ENCODE measurements at regions of chr17 and their contacts with region 1.

Region 1: GRCh38 chr17:75087558-75088453 is at the start of gene SLC16A5:
- DNase-seq: peak; percentile 95
- H3K4me3 Mint-ChIP-seq: peak within 1 kb of the TSS; percentile 87
- H3K27ac Mint-ChIP-seq: peak within 1 kb of the TSS; percentile 93
- H3K4me1 Mint-ChIP-seq: peaks cover 48% of the 10 kb centered on the region
- H3K27me3 Mint-ChIP-seq: no peaks in the 10 kb centered on the region
- CTCF ChIP-seq: no peak
- total RNA-seq, gene SLC16A5: 26.0 and 33.1 TPM in 2 replicates

Region 2: DNA sequence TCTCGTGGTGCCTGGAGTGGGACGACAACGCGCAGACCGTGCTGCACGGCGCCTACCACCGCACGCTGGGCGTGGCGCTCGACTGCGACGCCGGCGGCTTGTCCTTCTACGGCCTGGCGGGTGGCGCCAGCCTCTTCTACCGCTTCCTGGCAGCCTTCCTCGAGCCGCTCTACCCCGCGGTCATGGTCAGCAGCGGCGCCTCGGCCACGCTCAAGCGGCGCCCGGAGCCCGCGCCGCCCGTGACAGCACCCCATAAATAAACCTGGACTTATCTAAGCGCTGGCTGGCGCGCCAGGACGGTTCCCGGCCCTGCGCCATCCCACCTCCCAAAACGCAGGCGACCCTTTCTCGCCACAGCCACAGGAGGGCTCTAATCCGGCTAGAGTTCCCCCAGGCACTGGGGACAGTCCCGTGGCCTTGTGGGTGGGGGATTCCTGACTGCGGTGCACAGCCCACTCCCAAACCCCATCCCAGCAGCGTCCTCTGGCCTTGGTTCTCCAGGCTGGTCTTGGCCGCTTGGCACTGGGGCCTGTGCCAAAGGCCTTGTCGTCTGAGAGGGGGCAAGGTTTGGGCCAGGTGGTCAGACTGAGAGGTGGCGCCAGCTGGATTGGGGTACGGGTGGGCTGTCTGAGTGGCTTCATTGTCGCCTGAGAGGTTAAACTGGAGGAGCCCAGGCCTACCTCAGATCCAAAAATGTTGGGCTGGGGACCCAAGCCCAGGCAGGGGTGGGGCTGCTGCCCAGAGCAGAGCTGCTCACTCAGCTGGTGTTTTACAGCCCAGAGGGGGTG is 10.1 kb before region 1 on chr17:
- CTCF ChIA-PET with region 1: no interaction called
- POLR2A ChIA-PET with region 1: interaction called, 21 read pairs
- intact Hi-C with region 1: no loop called
- DNase-seq: no peak
- H3K4me3 Mint-ChIP-seq: no peak overlapping the region
- H3K27ac Mint-ChIP-seq: no peak overlapping the region
- H3K4me1 Mint-ChIP-seq: peaks cover 17% of the 10 kb centered on the region
- H3K27me3 Mint-ChIP-seq: no peaks in the 10 kb centered on the region
- CTCF ChIP-seq: no peak